Activated CD8-positive, alpha-beta memory T cell treated with anti-CD3 and anti-CD28 coated beads, Interleukin-2, amount 10 ng/mL, durations not matched to agents 7 days and 5 days (primary cell): ENCODE measurements at regions of chr22 and their contacts with region 1.

Region 1: GRCh38 chr22:50148991-50149721 is 21.4 kb upstream of the PANX2 start:
- DNase-seq: peak; percentile 82
- ATAC-seq: peak; percentile 96
- H3K4me3 Mint-ChIP-seq: no peak overlapping the region
- H3K27ac Mint-ChIP-seq: no peak overlapping the region
- H3K4me1 Mint-ChIP-seq: peaks cover 8% of the 10 kb centered on the region
- H3K27me3 Mint-ChIP-seq: peaks cover 5% of the 10 kb centered on the region

Region 2: DNA sequence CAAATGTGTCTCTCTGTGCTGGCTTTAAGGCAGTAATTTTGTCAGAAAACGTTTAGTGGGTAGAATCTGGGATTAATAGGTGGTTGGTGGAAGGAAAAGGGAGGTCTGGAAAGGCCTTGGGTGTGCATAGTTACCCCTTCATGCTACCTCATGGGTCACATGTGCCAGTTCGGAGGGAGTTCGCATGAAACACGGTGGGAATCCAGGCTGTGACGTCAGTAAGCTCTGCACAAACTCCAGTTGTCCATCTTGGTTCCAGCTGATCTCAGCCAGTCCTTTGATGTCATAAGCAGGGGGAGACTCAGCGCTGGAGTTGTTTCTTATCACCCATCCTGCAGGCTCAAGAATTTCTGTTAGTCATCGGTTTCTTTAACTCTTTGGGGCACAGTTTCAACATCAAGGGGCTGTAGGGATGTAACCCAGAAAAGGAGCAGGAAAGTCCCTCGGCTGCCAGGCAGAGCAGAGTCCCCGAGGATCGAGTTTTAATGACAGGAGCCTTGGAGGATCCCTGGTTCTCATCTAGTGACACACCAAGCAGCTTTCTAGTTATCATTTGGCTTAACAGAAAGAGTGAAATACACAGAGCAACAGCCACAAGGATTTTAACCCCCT is 30.5 kb before region 1 on chr22:
- CTCF ChIA-PET with region 1: no interaction called
- DNase-seq: no peak
- ATAC-seq: no peak
- H3K4me3 Mint-ChIP-seq: no peak overlapping the region
- H3K27ac Mint-ChIP-seq: no peak overlapping the region
- H3K4me1 Mint-ChIP-seq: no peaks in the 10 kb centered on the region
- H3K27me3 Mint-ChIP-seq: peaks cover 31% of the 10 kb centered on the region

Region 3: GRCh38 chr22:50190182-50190940 is 41.2 kb after region 1 on chr22:
- CTCF ChIA-PET with region 1: interaction called, 16 read pairs
- DNase-seq: peak; percentile 88
- ATAC-seq: peak; percentile 57
- H3K4me3 Mint-ChIP-seq: peak overlapping the region; percentile 88
- H3K27ac Mint-ChIP-seq: peak overlapping the region; percentile 95
- H3K4me1 Mint-ChIP-seq: peaks cover 52% of the 10 kb centered on the region
- H3K27me3 Mint-ChIP-seq: no peaks in the 10 kb centered on the region

Region 4: DNA sequence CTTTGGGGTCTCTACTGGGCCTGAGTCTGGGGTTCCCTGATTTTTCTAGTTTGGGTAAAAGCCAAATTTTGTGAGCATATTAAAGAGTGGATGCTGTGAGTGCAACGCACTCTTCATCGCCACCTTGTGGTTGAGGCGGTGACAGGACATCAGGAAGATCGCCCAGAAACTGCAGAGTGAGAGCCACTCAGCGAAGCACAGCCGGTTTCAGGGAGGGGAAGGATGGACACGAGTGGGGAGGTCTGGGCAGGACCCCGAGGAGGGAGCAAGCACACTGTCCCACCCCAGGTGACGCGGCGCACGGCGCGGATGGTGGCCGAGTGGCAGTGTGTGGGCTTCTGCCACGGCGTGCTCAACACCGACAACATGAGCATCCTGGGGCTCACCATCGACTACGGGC is 60.7 kb after region 1 on chr22:
- CTCF ChIA-PET with region 1: interaction called, 45 read pairs
- DNase-seq: peak; percentile 81
- ATAC-seq: peak; percentile 77
- H3K4me3 Mint-ChIP-seq: no peak overlapping the region
- H3K27ac Mint-ChIP-seq: peak overlapping the region; percentile 71
- H3K4me1 Mint-ChIP-seq: peaks cover 13% of the 10 kb centered on the region
- H3K27me3 Mint-ChIP-seq: no peaks in the 10 kb centered on the region

Region 5: DNA sequence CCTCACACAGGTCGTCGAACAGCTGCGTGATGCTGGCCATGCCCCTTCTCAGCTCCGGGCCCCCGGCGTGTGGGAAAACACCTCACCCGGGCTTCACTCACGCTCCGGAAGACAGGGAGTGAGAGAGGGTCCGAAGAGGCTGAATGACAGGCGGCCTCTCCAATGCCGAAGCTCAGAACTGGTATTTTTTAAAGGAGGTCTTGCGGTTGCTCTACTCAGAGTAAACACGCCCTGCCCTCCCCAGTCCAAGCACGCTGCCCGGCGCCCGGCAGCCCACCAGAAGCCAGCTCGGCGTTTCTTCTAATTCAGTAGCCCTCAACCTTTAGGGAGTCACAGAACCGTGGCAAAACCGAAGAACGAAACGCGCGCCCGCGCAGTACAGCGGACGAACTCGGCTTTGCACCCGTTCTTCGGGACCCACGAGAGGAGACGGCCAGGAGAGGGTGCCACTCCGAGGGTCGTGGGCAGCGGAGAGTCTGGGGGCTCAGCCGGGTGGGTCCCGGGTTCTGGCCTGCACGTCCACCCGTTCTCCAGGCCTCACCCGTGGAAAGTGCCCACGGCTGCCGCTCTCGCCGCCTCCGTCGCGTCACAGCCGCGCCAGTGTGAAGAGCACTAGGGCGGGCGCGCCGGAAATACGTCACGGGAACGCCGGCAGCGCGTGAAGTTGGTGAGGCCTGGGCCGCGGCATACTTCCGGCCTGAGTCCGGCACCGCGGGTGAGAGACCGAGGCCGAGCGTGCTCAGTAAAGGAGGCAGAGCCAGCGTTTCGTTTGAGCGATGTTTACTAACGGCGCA is 95.5 kb after region 1 on chr22 and contains the start of gene TUBGCP6:
- CTCF ChIA-PET with region 1: interaction called, 13 read pairs
- DNase-seq: peak; percentile 95
- ATAC-seq: peak; percentile 84
- H3K4me3 Mint-ChIP-seq: peak within 1 kb of the TSS; percentile 90
- H3K27ac Mint-ChIP-seq: peak within 1 kb of the TSS; percentile 99
- H3K4me1 Mint-ChIP-seq: peaks cover 46% of the 10 kb centered on the region
- H3K27me3 Mint-ChIP-seq: no peaks in the 10 kb centered on the region
- total RNA-seq, gene TUBGCP6: 60.9 to 72.0 TPM